CD4-positive, alpha-beta T cell (primary cell): ENCODE measurements at regions of chr9 and their contacts with region 1.

Region 1: DNA sequence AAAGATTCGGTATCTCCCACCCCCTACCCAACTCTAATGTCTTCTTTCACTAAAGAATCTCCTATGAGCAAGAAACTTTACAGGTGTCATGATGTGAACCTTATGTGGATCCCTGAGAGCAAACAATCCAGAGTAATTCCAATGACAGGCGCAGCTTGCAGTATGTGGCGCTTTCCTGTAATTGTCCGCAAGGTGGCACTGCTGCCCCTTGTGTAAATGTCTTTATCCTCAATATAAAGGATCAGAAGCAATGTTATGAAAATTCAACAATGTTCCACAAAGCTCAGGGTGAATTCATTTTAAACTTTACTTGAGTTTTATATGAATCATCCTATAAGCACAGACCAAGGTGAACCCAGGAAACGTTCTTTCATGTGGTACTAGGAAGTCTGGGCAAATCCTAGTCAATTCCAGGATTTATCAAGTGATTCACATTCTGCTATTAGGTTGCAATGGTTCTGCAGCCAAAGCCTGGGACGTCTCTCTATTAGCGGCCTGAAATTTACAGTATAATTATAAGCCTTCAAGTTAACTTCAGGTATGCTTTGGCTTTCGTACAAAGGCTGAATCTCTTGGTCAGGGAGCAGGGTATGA is 113.7 kb downstream of the TRPM6 start:
- DNase-seq: peak; percentile 44 to 83 (median 60)
- ATAC-seq: peak; percentile 79
- H3K4me3 ChIP-seq: no peak overlapping the region
- H3K4me3 Mint-ChIP-seq: no peak overlapping the region
- H3K27ac ChIP-seq: no peak overlapping the region
- H3K27ac Mint-ChIP-seq: no peak overlapping the region
- H3K4me1 ChIP-seq: no peaks in the 10 kb centered on the region
- H3K4me1 Mint-ChIP-seq: no peaks in the 10 kb centered on the region
- H3K27me3 ChIP-seq: peaks cover 6 to 7% of the 10 kb centered on the region in 2 experiments
- H3K27me3 Mint-ChIP-seq: peaks cover 18% of the 10 kb centered on the region
- CTCF ChIP-seq: peak; percentile 93

Region 2: DNA sequence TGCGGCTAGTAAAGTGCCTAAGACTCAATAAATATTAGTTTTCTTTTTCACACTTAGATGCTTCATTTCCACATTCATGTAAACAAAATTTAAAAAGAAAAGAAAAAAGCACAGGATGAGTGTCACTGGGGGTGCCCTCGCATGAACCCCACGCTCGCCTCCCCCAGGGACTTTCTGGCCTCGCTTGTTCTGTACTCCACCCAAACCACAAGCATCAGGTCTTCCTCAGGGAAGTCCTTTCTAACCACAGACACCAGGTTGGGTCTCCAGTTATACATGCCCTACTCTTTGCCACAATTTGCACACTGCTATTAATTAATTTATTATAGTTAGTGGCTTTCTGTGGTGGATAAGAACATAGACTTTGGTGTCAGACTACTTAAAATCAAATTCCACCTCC is 184.4 kb before region 1 on chr9:
- CTCF ChIA-PET with region 1: no interaction called
- POLR2A ChIA-PET with region 1: no interaction called
- intact Hi-C with region 1: no loop called
- DNase-seq: no peak
- ATAC-seq: no peak
- H3K4me3 ChIP-seq: no peak overlapping the region
- H3K4me3 Mint-ChIP-seq: no peak overlapping the region
- H3K27ac ChIP-seq: no peak overlapping the region
- H3K27ac Mint-ChIP-seq: no peak overlapping the region
- H3K4me1 ChIP-seq: no peaks in the 10 kb centered on the region
- H3K4me1 Mint-ChIP-seq: no peaks in the 10 kb centered on the region
- H3K27me3 ChIP-seq: no peaks in the 10 kb centered on the region
- H3K27me3 Mint-ChIP-seq: no peaks in the 10 kb centered on the region
- CTCF ChIP-seq: no peak

Region 3: DNA sequence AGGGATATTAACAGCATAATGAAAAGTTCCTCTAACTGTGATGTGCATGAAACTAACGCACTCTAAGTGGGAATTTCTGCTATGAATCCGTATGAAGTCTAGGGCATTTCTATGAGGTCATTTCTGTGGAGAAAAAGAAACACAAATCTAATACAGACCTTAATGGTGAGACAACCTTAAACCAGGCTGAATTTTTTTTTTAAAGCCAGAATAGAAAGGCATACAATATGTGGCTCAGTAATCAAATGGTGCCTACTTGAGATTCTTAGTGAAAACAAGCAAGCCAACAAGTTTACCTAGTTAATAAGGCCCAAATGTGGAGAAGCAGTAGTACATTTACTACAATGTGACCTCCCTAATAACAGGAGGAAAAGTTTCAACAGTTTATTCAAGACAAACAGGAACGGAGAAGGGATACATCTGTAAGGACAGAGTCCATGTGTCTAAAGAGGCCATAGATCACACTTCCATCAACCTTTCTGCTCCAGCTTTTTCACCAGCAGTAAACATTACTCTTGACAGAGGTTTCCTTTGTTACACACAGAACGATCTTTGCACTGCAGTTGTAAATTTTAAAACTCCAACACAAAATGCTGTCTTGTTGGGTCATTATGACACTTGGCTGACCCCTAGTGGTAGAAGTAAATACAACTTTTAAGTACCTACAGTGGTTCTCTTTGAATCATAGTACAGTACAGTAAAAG is 227.9 kb after region 1 on chr9:
- CTCF ChIA-PET with region 1: interaction called, 9 read pairs
- POLR2A ChIA-PET with region 1: interaction called, 3 read pairs
- intact Hi-C with region 1: loop called (anchors 1 kb)
- DNase-seq: peak in 4 of 14 experiments; percentile 11 to 87 (median 82)
- ATAC-seq: peak; percentile 96
- H3K4me3 ChIP-seq: no peak overlapping the region
- H3K4me3 Mint-ChIP-seq: no peak overlapping the region
- H3K27ac ChIP-seq: no peak overlapping the region
- H3K27ac Mint-ChIP-seq: no peak overlapping the region
- H3K4me1 ChIP-seq: no peaks in the 10 kb centered on the region
- H3K4me1 Mint-ChIP-seq: peaks cover 5% of the 10 kb centered on the region
- H3K27me3 ChIP-seq: no peaks in the 10 kb centered on the region
- H3K27me3 Mint-ChIP-seq: no peaks in the 10 kb centered on the region
- CTCF ChIP-seq: peak; percentile 92

Region 4: GRCh38 chr9:75238311-75238978 is 464.5 kb after region 1 on chr9:
- CTCF ChIA-PET with region 1: interaction called, 3 read pairs
- POLR2A ChIA-PET with region 1: no interaction called
- intact Hi-C with region 1: loop called (anchors 1 to 2 kb)
- DNase-seq: peak in 12 of 14 experiments; percentile 6 to 71 (median 32)
- ATAC-seq: peak; percentile 96
- H3K4me3 ChIP-seq: no peak overlapping the region
- H3K4me3 Mint-ChIP-seq: no peak overlapping the region
- H3K27ac ChIP-seq: no peak overlapping the region
- H3K27ac Mint-ChIP-seq: no peak overlapping the region
- H3K4me1 ChIP-seq: peaks cover 3% of the 10 kb centered on the region
- H3K4me1 Mint-ChIP-seq: no peaks in the 10 kb centered on the region
- H3K27me3 ChIP-seq: no peaks in the 10 kb centered on the region
- H3K27me3 Mint-ChIP-seq: no peaks in the 10 kb centered on the region
- CTCF ChIP-seq: peak; percentile 73

Region 5: DNA sequence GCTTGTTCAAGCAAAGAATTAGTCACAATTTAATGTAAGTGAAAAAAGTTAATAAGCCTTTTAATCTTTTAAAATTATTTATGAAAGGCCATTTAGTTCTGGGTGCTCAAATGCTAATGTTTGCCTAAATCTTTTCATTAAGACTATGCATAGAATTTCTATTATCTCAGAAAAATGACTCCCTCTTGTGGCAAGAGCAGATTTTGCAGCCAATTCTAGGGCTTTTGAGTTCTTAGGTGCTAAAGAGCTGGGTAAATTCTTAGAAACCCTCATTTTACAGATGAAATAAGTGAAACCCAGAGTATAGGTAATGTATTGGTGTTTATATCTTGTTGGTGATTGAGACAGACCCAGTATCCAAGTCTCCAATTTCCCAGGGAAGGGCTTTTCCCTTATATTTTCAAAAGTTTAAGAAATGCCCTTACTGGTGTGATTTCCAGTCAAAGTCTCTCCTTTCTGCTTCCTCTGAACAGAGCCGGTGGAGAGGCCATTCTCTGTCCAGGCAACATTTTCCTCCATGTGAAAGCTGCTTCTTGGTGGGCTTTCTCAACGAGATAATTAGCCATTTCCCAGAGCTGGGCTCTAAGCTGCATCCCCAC is 1092.4 kb after region 1 on chr9:
- CTCF ChIA-PET with region 1: no interaction called
- POLR2A ChIA-PET with region 1: no interaction called
- intact Hi-C with region 1: loop called in 1 of 2 experiments (anchors 2 kb)
- DNase-seq: peak in 10 of 14 experiments; percentile 7 to 67 (median 31)
- ATAC-seq: no peak
- H3K4me3 ChIP-seq: no peak overlapping the region
- H3K4me3 Mint-ChIP-seq: no peak overlapping the region
- H3K27ac ChIP-seq: no peak overlapping the region
- H3K27ac Mint-ChIP-seq: no peak overlapping the region
- H3K4me1 ChIP-seq: no peaks in the 10 kb centered on the region
- H3K4me1 Mint-ChIP-seq: peaks cover 19% of the 10 kb centered on the region
- H3K27me3 ChIP-seq: no peaks in the 10 kb centered on the region
- H3K27me3 Mint-ChIP-seq: no peaks in the 10 kb centered on the region
- CTCF ChIP-seq: peak; percentile 83